ENCODE measurements at regions of chr11 and their contacts with region 1.

Region 1: DNA sequence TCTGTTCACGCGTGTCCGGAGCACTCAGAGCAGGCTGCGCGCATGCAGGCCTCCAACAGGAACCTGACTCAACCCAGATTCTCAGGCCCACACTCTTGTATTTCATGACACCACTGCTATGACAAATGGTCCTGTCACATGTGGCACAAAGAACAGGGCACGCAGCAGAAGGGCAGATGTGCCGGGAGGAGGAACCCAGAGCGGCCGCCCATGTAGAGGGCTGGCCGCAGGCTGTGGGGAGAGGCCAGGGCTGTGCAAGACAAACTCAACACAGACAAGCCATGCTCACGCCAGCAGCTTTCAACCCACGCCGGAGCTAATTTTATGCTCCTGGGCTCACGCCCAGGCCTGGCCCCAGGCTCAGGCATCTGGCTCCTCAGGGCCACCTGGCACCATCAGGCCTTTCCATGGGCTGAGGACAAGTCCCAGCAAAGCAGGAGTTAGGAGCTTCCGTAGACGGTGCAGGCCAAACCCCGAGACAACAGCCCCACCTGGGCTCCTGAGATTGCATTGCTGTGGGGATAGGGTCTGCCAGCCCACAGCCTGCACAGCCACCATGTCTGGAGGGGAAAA is 40.0 kb downstream of the DUSP8 start:
- DNase-seq: peak; percentile 74
- H3K4me3 ChIP-seq: no peak overlapping the region
- H3K27ac ChIP-seq: peak overlapping the region; percentile 51 to 63
- H3K4me1 ChIP-seq: peaks cover 23% of the 10 kb centered on the region
- H3K27me3 ChIP-seq: no peaks in the 10 kb centered on the region
- CTCF ChIP-seq: peak in 2 of 4 experiments; percentile 8 to 17
- POLR2A ChIP-seq: no peak

Region 2: GRCh38 chr11:1453611-1454034 is 78.5 kb before region 1 on chr11:
- intact Hi-C with region 1: loop called (anchors 5 kb)
- DNase-seq: peak; percentile 39
- H3K4me3 ChIP-seq: no peak overlapping the region
- H3K27ac ChIP-seq: no peak overlapping the region
- H3K4me1 ChIP-seq: no peaks in the 10 kb centered on the region
- H3K27me3 ChIP-seq: peaks cover 3% of the 10 kb centered on the region
- CTCF ChIP-seq: peak in 3 of 4 experiments; percentile 36 to 70 (median 48)
- POLR2A ChIP-seq: no peak

Measured in prostate gland (tissue), 2 donors.